Activated T-helper 2 cell treated with anti-CD3 and anti-CD28 coated beads, Interferon-gamma antibody, Interleukin-2, Interleukin-4, amounts not matched to agents 10 μg/mL and 5 μg/mL and 100 μg/mL, durations not matched to agents 14 hours and 24 hours and 36 hours (primary cell): ENCODE measurements at regions of chr14 and their contacts with region 1.

Region 1: DNA sequence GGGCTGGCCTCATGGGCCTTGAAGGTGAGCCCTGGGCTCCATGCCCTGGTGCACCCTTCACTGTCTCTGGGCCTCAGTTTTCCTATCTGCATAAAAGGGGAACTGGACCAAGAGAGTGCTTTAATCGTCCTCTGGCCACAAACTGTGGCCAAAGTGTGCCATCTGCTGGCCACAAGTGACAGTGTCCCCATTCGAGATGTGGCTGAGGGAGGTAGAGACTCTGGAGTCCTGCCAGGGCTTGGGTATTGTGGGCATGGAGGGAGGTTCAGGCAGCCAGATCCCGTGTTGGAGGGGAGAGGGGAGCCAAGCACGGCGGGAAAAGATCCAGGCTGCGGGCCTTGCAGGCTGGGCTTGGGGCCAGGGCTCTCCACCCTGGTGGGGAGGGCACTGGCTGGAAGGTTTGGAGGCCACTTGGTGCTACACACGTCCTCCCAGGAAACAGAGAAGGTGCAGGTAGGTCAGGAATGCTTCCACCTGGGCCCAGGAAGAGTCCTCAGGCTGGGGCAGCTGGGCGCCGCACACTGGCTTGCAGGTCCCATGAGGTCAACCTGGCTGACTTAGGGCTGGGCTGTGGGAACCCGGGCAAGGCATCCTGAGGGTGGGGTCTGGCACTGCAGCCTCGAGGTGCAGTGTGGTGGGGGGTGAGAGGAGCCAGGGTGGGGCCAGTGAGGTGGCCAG is 7.3 kb upstream of the KIF26A start:
- DNase-seq: no peak
- H3K4me3 Mint-ChIP-seq: no peak overlapping the region
- H3K27ac Mint-ChIP-seq: no peak overlapping the region
- H3K4me1 Mint-ChIP-seq: no peaks in the 10 kb centered on the region
- H3K27me3 Mint-ChIP-seq: peaks cover 18% of the 10 kb centered on the region

Region 2: DNA sequence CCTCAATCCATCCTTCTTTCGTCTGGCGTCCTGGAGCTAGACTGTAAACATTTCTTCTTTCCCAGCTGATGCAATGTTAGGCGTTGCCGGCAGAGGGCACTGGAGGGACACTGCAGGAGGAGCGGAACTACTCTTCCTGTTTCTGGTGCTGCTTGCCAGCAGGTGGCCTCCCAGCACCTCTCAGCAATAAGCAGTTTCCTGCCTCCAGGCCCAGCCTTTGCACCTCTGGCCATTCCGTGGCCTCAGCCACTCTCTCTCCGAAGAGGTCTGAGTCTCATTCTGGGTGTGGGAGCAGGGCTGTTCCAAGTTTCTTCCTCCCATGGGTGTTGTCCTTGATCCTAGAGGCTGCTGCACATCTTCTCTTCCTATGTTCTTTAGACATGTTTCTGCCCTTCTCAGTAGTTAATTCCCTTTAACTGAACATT is 53.1 kb before region 1 on chr14:
- intact Hi-C with region 1: loop called (anchors 5 kb)
- DNase-seq: peak; percentile 82
- H3K4me3 Mint-ChIP-seq: no peak overlapping the region
- H3K27ac Mint-ChIP-seq: peak overlapping the region; percentile 9
- H3K4me1 Mint-ChIP-seq: peaks cover 13% of the 10 kb centered on the region
- H3K27me3 Mint-ChIP-seq: peaks cover 2% of the 10 kb centered on the region

Region 3: GRCh38 chr14:104116756-104117255 is 14.3 kb before region 1 on chr14:
- intact Hi-C with region 1: no loop called
- DNase-seq: no peak
- H3K4me3 Mint-ChIP-seq: no peak overlapping the region
- H3K27ac Mint-ChIP-seq: no peak overlapping the region
- H3K4me1 Mint-ChIP-seq: no peaks in the 10 kb centered on the region
- H3K27me3 Mint-ChIP-seq: peaks cover 23% of the 10 kb centered on the region